ENCODE measurements at regions of chr10 and their contacts with region 1.

Region 1: DNA sequence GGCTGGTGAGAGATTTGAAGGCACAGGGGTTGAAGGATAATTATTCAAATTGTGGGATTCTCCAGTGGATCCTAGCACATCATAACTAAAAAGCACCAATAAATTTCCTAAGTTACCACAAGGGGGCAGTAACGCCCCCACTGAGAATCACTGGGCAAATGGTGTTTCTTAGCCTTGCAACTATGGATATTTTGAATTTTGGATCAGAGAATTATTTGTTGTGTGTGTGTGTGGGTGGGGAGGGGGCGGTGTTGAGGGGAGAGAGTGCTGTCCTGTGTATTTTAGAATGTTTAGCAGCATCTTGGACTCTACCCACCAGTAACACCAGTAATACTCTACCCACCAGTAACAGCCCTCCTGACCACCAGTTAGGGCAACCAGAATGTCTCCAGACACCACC is 63.3 kb upstream of the PRKG1 start:
- DNase-seq: peak; percentile 5
- ATAC-seq: no peak
- H3K4me3 Mint-ChIP-seq: no peak overlapping the region
- H3K27ac Mint-ChIP-seq: no peak overlapping the region
- H3K4me1 Mint-ChIP-seq: no peaks in the 10 kb centered on the region
- H3K27me3 Mint-ChIP-seq: peaks cover 10% of the 10 kb centered on the region
- CTCF ChIP-seq: peak; percentile 86

Region 2: DNA sequence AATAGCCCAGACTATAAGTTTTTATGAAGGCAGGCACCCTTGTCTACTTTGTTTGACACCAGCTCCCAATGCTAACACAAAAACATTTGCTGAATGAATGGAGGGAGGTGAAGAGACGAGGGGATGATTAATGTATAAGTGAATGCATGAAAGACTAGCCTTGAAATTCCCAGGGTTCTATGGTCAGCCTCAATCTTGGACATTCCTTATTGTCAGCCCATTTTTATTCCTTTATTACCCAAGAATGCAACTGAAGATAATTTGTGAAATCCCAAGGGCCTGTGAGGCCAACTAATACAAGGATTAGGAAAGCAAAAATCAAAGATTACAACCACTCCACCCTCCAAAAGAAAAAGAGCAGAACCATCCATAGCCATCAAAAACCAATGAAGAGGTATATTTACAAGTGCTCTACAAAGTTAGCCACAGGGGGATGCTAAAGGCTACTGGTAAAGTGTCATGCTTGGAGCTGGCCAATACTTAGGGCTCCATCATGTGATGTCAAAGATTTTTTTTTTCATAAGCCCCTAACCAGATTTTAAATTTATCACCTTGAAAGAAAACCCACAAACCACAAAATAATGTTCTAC is 719.6 kb before region 1 on chr10:
- CTCF ChIA-PET with region 1: no interaction called
- POLR2A ChIA-PET with region 1: no interaction called
- intact Hi-C with region 1: no loop called
- DNase-seq: no peak
- ATAC-seq: peak; percentile 34
- H3K4me3 Mint-ChIP-seq: no peak overlapping the region
- H3K27ac Mint-ChIP-seq: no peak overlapping the region
- H3K4me1 Mint-ChIP-seq: no peaks in the 10 kb centered on the region
- H3K27me3 Mint-ChIP-seq: no peaks in the 10 kb centered on the region
- CTCF ChIP-seq: no peak

Region 3: DNA sequence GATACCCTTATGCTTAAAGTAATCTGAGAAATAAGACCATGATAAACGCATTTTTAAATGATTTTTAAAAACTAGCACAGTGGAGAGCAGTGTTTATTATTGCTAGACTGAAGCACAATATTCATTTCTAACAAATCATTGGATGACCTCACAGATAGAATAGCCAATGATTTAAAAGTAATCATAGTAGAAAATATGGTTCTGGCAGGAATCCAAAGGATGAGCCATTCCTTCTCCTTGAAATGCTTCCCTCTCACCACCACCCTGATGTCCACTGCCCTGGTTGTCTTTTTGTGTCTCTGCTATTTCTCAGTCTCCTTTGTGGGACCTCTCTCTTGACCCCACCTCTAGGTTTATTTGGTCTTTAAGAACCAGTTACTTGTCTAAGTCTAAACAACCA is 128.2 kb after region 1 on chr10:
- CTCF ChIA-PET with region 1: no interaction called
- POLR2A ChIA-PET with region 1: no interaction called
- intact Hi-C with region 1: no loop called
- DNase-seq: no peak
- ATAC-seq: no peak
- H3K4me3 Mint-ChIP-seq: no peak overlapping the region
- H3K27ac Mint-ChIP-seq: no peak overlapping the region
- H3K4me1 Mint-ChIP-seq: no peaks in the 10 kb centered on the region
- H3K27me3 Mint-ChIP-seq: no peaks in the 10 kb centered on the region
- CTCF ChIP-seq: no peak

Region 4: DNA sequence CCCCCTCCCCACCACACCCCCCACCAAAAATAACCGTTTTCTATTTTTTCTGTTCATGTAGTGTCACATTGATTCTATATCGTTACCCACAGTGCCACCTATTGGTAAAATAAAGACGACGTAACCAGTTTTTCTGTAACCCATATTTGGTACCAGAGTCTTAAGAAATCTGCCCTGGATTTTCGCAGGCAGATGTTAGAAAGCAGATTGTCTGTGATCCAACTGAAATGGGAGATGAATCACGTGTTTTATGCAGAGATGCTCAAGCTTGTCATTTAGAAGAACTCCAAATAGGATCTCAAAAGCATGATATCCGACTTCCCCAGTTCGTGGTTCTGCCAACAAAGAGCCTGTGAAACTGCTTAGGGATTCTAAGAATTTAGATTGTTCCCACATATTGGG is 949.5 kb after region 1 on chr10:
- CTCF ChIA-PET with region 1: no interaction called
- POLR2A ChIA-PET with region 1: no interaction called
- intact Hi-C with region 1: loop called (anchors 5 kb)
- DNase-seq: no peak
- ATAC-seq: peak; percentile 30
- H3K4me3 Mint-ChIP-seq: no peak overlapping the region
- H3K27ac Mint-ChIP-seq: no peak overlapping the region
- H3K4me1 Mint-ChIP-seq: no peaks in the 10 kb centered on the region
- H3K27me3 Mint-ChIP-seq: peaks cover 13% of the 10 kb centered on the region
- CTCF ChIP-seq: peak; percentile 66

Region 5: DNA sequence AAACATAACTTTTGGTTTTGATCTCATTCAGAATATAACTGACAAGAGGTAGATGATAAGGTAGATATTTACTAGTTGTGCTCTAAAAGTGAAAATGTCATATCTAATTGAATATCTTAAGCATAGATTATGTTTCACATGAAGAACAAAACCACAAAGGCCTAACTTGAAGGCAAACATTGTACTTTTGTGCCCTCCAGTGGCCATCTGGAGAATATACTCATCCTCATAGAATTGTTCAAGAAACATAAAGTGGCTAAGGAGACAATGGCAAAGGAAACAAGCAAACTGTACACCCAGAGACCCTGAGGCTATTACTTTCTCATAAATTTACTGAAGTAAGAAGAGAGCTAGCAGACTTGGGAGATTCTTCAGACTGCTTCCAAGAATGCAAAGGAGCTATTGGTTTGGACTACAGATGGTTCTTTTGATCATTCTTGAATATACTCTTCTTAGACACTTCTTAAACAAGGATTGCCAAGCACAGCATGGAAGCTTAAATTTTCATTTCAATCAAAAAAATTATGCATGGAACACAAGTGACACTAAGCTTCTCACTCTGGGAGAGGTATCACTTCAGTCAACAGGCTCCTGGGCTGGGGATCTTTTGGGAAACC is 1204.9 kb after region 1 on chr10:
- CTCF ChIA-PET with region 1: interaction called, 6 read pairs
- POLR2A ChIA-PET with region 1: no interaction called
- intact Hi-C with region 1: loop called (anchors 5 kb)
- DNase-seq: peak; percentile 54
- ATAC-seq: peak; percentile 75
- H3K4me3 Mint-ChIP-seq: no peak overlapping the region
- H3K27ac Mint-ChIP-seq: no peak overlapping the region
- H3K4me1 Mint-ChIP-seq: no peaks in the 10 kb centered on the region
- H3K27me3 Mint-ChIP-seq: no peaks in the 10 kb centered on the region
- CTCF ChIP-seq: peak; percentile 78

Measured in activated CD8-positive, alpha-beta T cell treated with anti-CD3 and anti-CD28 coated beads for 36 hours (primary cell).